Thyroid gland (tissue), 4 donors: ENCODE measurements at regions of chr1 and their contacts with region 1.

Region 1: GRCh38 chr1:150168960-150169601 is 19.4 kb downstream of the PLEKHO1 start:
- DNase-seq: peak; percentile 60
- H3K4me3 ChIP-seq: no peak overlapping the region
- H3K27ac ChIP-seq: no peak overlapping the region
- H3K4me1 ChIP-seq: peaks cover 0 to under 1% of the 10 kb centered on the region in 2 donors
- H3K27me3 ChIP-seq: no peaks in the 10 kb centered on the region
- CTCF ChIP-seq: peak; percentile 29 to 59 (median 56)
- POLR2A ChIP-seq: no peak

Region 2: GRCh38 chr1:149962123-149962548 is 206.9 kb before region 1 on chr1:
- intact Hi-C with region 1: loop called (anchors 5 kb)
- DNase-seq: peak; percentile 51 to 53
- H3K4me3 ChIP-seq: no peak overlapping the region
- H3K27ac ChIP-seq: peak overlapping the region in 2 of 3 donors; percentile 18 to 71
- H3K4me1 ChIP-seq: peaks cover 0 to 21% of the 10 kb centered on the region in 2 donors
- H3K27me3 ChIP-seq: no peaks in the 10 kb centered on the region
- CTCF ChIP-seq: peak; percentile 56 to 88 (median 78)
- POLR2A ChIP-seq: no peak

Region 3: DNA sequence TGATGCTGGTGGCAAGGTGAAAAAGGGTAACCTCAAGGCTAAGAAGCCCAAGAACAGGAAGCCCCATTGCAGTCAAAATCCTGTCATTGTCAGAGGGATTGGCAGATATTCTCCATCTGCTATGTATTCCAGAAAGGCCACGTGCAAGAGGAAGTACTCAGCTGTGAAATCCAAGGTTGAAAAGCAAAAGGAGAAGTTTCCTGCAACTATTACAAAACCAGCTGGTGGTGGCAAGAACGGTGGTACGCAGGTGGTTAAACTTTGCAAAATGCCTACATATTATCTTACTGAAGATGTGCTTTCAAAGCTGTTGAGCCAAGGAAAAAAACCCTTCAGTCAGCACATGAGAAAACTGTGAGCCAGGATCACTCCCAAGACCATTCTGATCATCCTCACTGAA is 115.2 kb before region 1 on chr1:
- intact Hi-C with region 1: loop called (anchors 5 kb)
- DNase-seq: no peak
- H3K4me3 ChIP-seq: no peak overlapping the region
- H3K27ac ChIP-seq: no peak overlapping the region
- H3K4me1 ChIP-seq: no peaks in the 10 kb centered on the region
- H3K27me3 ChIP-seq: no peaks in the 10 kb centered on the region
- CTCF ChIP-seq: no peak
- POLR2A ChIP-seq: no peak

Region 4: DNA sequence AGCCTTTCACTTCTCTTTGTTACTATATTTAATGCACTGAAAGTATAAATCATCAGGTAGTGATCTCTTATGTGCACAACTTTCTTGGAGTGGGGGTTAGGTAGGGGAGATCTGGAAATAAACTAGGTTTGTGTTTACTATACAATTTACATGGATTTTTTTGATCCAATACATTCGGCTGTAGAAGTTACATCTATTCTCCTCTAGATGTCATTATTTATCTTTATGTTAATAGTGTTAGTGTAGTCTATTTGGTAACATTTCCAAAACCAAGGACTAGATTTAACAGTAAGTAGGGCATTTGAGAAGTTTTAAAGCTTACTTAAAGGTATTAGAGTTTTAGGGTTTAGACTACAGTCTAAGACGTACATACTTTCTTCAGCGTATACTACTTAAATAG is 96.1 kb before region 1 on chr1:
- intact Hi-C with region 1: loop called (anchors 2 kb)
- DNase-seq: no peak
- H3K4me3 ChIP-seq: no peak overlapping the region
- H3K27ac ChIP-seq: no peak overlapping the region
- H3K4me1 ChIP-seq: peaks cover 8 to 9% of the 10 kb centered on the region in 2 donors
- H3K27me3 ChIP-seq: no peaks in the 10 kb centered on the region
- CTCF ChIP-seq: peak in 3 of 6 experiments; percentile 21 to 29 (median 26)
- POLR2A ChIP-seq: no peak

Region 5: GRCh38 chr1:150235852-150236613 is 67.0 kb after region 1 on chr1 and contains the start of gene ANP32E:
- intact Hi-C with region 1: no loop called
- DNase-seq: peak; percentile 95
- H3K4me3 ChIP-seq: peak within 1 kb of the TSS; percentile 76 to 91 (median 85)
- H3K27ac ChIP-seq: peak within 1 kb of the TSS; percentile 85 to 99 (median 96)
- H3K4me1 ChIP-seq: peaks cover 5 to 9% of the 10 kb centered on the region in 2 donors
- H3K27me3 ChIP-seq: no peaks in the 10 kb centered on the region
- CTCF ChIP-seq: peak in 2 of 6 experiments; percentile 33 to 56
- POLR2A ChIP-seq: peak; percentile 53 to 96
- total RNA-seq, gene ANP32E: 19.3 to 25.8 (median 24.5) TPM

Region 6: GRCh38 chr1:150560011-150560438 is 390.9 kb after region 1 on chr1:
- intact Hi-C with region 1: no loop called
- DNase-seq: peak; percentile 73
- H3K4me3 ChIP-seq: no peak overlapping the region
- H3K27ac ChIP-seq: peak overlapping the region; percentile 99 to 100 (median 99)
- H3K4me1 ChIP-seq: peaks cover 46 to 54% of the 10 kb centered on the region in 2 donors
- H3K27me3 ChIP-seq: no peaks in the 10 kb centered on the region
- CTCF ChIP-seq: peak; percentile 81 to 95 (median 85)
- POLR2A ChIP-seq: no peak